SK-N-SH (cell line): ENCODE measurements at regions of chr14 and their contacts with region 1.

Region 1: GRCh38 chr14:22994762-22995275 is 12.5 kb upstream of the AJUBA start:
- DNase-seq: peak; percentile 77
- H3K4me3 ChIP-seq: no peak overlapping the region; a peak in 1 of 4 replicates
- H3K27ac ChIP-seq: no peak overlapping the region
- H3K4me1 ChIP-seq: peaks cover 4 to 25% of the 10 kb centered on the region in 2 experiments; a peak in 3 of 4 replicates
- H3K27me3 ChIP-seq: no peaks in the 10 kb centered on the region
- CTCF ChIP-seq: peak; percentile 70
- EP300 ChIP-seq: no peak
- RAD21 ChIP-seq: peak; percentile 83

Region 2: DNA sequence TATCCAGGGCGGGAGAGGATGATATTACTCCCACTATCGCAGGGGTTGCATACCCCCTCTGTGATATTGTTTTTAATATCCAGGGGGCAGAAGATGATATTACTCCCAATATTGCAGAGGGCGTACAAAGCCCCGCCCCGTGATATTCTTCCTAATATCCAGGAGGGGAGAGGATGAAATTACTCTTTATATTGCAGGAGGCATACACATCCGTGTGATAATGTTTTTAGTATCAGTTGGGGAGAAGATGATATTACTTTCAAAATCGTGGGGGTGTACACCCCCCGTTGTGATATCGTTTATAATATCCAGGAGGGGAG is 281.2 kb before region 1 on chr14:
- CTCF ChIA-PET with region 1: no interaction called
- POLR2A ChIA-PET with region 1: no interaction called
- DNase-seq: no peak
- H3K4me3 ChIP-seq: peak overlapping the region; percentile 18 to 53; a peak in 2 of 4 replicates
- H3K27ac ChIP-seq: no peak overlapping the region
- H3K4me1 ChIP-seq: no peaks in the 10 kb centered on the region
- H3K27me3 ChIP-seq: peaks cover 40% of the 10 kb centered on the region
- CTCF ChIP-seq: no peak
- EP300 ChIP-seq: no peak
- RAD21 ChIP-seq: no peak

Region 3: DNA sequence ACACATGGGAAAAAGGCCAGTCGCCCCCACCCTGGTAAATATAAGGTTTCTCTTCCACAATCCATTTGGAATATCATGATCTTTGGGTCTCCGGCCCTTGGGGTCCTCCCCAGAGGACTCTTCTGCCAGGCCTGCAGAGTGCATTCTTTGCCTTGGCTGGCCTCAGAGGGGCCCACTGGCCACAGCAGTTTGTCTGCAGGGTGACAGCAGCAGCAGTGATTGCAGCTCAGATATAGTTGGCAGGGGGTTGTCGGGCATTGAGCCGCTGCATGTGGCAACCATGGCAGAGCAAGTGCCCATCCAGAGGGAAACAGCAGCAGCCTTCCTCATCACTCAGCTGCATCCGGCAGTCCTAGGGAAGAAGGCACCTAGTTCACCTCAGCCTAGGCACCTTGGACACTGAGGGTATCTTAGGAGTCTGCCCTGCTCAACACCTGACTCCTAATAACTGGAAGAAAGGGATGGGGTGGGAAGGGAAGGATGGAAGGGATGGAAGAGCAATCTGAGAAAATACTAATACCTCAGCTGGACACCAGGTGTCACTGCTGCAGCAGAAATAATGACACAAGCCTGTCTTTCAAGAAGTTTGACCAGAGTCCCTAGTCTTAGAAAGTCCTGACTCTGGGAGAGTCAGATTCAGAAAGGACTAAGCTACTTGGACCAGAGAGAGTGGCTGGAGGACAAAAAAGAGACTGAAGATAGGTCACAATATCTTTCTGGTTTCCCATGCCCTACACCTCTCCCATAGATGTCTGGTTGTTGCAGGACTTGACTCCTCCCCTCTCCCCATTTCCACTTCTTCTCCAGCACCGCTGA is 21.4 kb before region 1 on chr14:
- CTCF ChIA-PET with region 1: interaction called, 198 read pairs
- POLR2A ChIA-PET with region 1: no interaction called
- DNase-seq: peak; percentile 67
- H3K4me3 ChIP-seq: no peak overlapping the region
- H3K27ac ChIP-seq: no peak overlapping the region; a peak in 1 of 4 replicates
- H3K4me1 ChIP-seq: peaks cover 21 to 23% of the 10 kb centered on the region in 2 experiments
- H3K27me3 ChIP-seq: no peaks in the 10 kb centered on the region
- CTCF ChIP-seq: peak; percentile 71
- EP300 ChIP-seq: no peak
- RAD21 ChIP-seq: peak; percentile 88

Region 4: DNA sequence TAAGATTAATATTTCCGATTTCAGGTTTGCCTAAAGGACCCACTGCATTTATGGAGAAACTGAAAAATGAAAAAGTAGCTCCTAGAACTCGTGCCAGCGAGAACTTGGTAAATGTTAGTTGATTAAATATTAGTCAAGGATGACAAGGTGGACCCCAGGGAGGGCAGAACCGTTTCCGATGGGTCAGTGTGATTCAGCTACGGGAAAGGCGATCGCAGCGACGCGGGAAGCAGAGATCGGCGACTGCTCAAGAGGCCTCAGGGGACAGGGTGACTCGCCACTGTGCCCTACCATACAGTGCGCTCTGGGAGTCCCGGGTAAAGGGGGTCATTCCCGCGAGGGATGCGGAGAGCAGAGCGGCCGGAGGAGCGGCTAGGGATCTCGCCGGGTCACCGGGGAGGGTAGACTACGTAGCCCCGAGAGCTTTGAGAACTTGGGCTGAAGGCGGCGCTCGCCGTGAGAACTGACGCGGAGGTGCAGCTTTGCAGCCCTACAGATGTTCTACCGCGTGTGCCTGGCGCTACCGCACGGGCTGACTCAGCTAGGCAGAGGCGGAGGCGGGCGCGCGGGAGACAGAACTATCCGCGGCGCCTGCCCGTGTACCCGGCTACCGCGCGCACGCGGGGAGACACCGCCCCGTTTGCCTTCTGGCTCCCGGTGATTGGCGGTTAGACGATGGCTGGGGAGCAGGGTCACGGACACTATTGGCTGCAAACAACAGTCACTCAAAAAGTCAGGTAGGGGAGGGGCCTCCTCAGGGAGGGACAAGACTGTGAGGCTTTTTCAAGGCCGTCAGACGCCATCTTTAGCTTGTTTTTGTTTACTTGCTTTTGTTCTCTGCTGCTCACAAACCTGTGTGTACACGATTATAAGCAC is 12.0 kb after region 1 on chr14:
- CTCF ChIA-PET with region 1: interaction called, 61 read pairs
- POLR2A ChIA-PET with region 1: interaction called, 20 read pairs
- DNase-seq: peak; percentile 97
- H3K4me3 ChIP-seq: peak overlapping the region; percentile 67 to 68
- H3K27ac ChIP-seq: peak overlapping the region; percentile 81 to 98
- H3K4me1 ChIP-seq: peaks cover 10 to 18% of the 10 kb centered on the region in 2 experiments
- H3K27me3 ChIP-seq: no peaks in the 10 kb centered on the region
- CTCF ChIP-seq: peak; percentile 32
- EP300 ChIP-seq: no peak
- RAD21 ChIP-seq: no peak

Region 5: GRCh38 chr14:23015618-23016017 is 20.8 kb after region 1 on chr14:
- CTCF ChIA-PET with region 1: interaction called, 29 read pairs
- POLR2A ChIA-PET with region 1: no interaction called
- DNase-seq: no peak
- H3K4me3 ChIP-seq: no peak overlapping the region
- H3K27ac ChIP-seq: no peak overlapping the region
- H3K4me1 ChIP-seq: peaks cover 0 to 11% of the 10 kb centered on the region in 2 experiments; a peak in 1 of 4 replicates
- H3K27me3 ChIP-seq: no peaks in the 10 kb centered on the region
- CTCF ChIP-seq: no peak
- EP300 ChIP-seq: no peak
- RAD21 ChIP-seq: no peak

Region 6: DNA sequence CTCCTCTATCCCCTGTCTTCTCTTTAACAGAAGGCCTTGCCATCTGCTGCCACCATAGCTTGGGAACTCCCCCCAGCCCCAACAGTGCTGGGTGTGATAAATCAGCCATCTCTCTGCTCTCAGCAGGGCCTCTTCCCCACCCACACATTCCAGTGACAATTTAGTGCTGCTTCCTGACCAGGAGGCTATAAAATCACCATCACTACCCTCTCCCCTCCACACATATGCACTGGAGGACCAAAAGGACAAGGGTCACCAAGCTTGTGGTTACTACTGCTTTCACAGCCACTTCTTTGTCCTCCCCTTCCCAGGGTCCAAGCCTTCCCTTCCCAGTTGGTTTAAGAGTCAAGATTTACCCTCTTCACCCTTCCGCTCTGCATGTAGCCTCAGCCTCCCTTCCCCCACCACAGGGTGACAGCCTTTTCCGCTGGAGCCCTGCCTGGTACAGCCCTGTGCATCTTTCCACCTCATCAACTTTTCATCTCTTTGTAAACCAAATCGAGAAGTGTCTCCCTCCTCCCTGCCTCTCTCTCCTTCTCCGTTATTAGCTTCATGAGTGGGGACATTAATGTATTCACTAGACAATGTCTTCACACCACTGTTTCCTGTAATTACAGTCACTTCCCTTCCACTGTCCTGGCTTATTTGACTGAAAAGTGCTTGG is 30.5 kb after region 1 on chr14:
- CTCF ChIA-PET with region 1: interaction called, 22 read pairs
- POLR2A ChIA-PET with region 1: no interaction called
- DNase-seq: no peak
- H3K4me3 ChIP-seq: no peak overlapping the region
- H3K27ac ChIP-seq: no peak overlapping the region
- H3K4me1 ChIP-seq: peaks cover 4 to 12% of the 10 kb centered on the region in 2 experiments; a peak in 2 of 4 replicates
- H3K27me3 ChIP-seq: no peaks in the 10 kb centered on the region
- CTCF ChIP-seq: no peak
- EP300 ChIP-seq: no peak
- RAD21 ChIP-seq: no peak

Region 7: GRCh38 chr14:23160924-23161538 is 166.2 kb after region 1 on chr14:
- CTCF ChIA-PET with region 1: no interaction called
- POLR2A ChIA-PET with region 1: no interaction called
- DNase-seq: no peak
- H3K4me3 ChIP-seq: no peak overlapping the region
- H3K27ac ChIP-seq: no peak overlapping the region; a peak in 1 of 4 replicates
- H3K4me1 ChIP-seq: peaks cover 0 to 17% of the 10 kb centered on the region in 2 experiments; a peak in 2 of 4 replicates
- H3K27me3 ChIP-seq: no peaks in the 10 kb centered on the region
- CTCF ChIP-seq: no peak
- EP300 ChIP-seq: no peak
- RAD21 ChIP-seq: no peak